Endothelial cell of umbilical vein (primary cell): ENCODE measurements at regions of chr11 and their contacts with region 1.

Region 1: DNA sequence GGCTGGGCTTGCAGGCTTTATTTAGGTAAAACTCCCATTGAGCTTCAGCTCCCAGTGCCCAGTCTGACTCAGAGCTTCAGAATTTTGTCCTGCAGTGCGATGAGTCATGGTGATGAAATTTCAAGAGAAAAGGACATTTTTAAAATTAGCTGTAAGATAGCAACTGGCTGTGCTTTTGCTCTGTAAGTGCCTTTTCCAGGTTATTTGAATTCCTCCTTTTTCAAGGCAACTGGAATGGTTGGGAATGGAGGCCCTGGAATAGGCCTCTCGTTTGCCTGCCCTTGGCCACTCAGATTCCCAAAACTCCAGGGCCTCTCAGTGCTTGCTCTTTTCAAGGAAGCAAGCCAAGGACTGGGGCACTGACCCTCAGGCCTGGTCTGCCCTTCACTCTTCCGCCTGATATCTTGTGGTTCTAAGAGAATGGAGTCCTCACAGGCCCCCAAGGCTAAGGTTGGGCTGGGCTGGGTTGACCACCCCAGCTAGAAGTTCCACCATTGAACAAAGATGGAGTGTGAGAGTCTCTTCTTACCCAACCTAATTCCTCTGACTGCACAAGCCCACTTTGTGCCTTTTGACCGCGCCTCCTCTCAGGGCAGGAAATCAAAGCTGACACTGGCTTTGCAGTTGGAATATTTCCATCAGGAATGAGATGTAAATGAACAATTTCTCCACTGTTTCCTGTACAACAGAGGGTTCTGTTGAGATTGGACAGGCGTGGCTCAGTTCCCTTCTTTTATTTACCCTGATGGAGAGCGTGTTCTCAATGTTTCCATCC is 59.4 kb upstream of the PRSS23 start:
- DNase-seq: peak; percentile 94
- H3K4me3 ChIP-seq: peak overlapping the region in 1 of 3 experiments; percentile 7
- H3K27ac ChIP-seq: peak overlapping the region; percentile 99
- H3K4me1 ChIP-seq: peaks cover 78% of the 10 kb centered on the region
- H3K27me3 ChIP-seq: no peaks in the 10 kb centered on the region
- CTCF ChIP-seq: no peak
- POLR2A ChIP-seq: no peak

Region 2: DNA sequence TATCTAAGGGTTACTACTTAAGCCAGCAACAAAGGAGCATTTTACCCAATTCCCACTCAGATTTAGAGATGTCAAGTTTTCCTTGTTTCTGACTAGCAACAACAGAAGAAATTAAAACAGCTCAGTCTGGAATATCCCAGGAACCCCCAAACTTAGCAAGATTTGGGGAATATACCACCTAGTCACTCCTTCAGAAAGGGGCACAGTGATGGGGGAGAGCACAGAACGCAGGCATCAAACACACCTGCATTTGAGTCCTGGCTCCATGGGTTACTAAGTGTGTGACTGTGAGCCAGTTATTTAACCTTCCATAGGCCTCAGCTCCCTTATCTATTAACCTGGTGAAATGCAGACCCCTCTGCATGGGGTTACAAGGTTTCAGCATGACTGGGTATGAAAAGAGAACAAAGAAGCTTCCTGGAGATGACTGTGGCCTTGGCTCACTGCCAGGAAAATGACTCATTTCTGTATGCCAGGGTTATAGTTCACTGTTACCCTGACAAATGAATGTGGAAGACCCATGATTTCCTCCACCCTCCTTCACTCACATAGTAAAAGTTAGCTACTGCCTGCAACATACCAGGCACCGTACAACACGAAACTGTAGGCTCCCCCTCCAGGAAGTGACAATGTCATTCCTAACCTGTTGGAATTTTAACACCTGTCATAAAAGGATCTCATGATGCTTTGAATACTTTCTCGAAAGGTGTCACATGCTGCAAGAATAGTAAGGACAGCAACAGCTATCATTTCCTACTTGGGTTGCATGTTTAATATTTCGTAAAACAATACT is 148.0 kb before region 1 on chr11:
- CTCF ChIA-PET with region 1: no interaction called
- POLR2A ChIA-PET with region 1: no interaction called
- dilution Hi-C with region 1: no loop called
- intact Hi-C with region 1: loop called (anchors 5 kb)
- DNase-seq: peak; percentile 99
- H3K4me3 ChIP-seq: no peak overlapping the region
- H3K27ac ChIP-seq: peak overlapping the region; percentile 99
- H3K4me1 ChIP-seq: peaks cover 60% of the 10 kb centered on the region
- H3K27me3 ChIP-seq: no peaks in the 10 kb centered on the region
- CTCF ChIP-seq: no peak
- POLR2A ChIP-seq: peak; percentile 12

Region 3: DNA sequence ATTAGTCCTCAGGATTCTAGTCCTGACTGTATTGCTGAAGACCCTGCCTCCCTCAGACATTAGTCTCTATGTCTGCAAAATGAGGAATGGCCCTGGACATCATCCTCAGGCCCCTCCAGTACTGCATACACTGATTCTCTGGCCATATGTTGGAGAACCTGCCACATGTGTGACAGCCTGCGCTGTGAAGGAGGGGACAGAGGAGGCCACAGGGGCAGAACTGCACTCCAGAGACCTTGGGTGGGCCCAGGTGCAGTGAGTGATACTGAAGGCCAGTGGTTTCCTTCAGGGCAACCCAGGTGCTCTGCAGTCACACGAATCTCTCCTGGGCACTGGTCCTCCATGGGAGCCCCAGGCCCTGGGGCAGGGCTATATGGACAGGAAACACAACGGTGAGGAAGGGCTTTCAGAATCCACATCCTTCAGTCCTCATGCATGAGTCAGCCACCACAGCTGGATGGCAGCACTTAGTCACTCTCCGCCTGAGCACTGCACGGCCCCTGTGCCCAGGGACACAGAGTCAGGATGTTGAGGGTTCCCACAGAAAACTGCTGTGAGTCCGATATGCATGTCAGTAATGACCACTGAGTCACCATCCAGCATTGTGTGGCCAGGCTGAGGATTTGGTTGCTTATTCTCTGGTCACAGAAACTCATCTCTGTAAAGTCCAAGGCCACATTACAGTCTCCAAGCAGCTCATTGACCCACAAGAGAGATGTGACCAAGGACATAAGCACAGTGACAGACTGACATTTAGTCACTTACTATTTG is 108.2 kb before region 1 on chr11:
- CTCF ChIA-PET with region 1: no interaction called
- POLR2A ChIA-PET with region 1: no interaction called
- dilution Hi-C with region 1: no loop called
- intact Hi-C with region 1: loop called (anchors 1 kb)
- DNase-seq: peak; percentile 96
- H3K4me3 ChIP-seq: no peak overlapping the region
- H3K27ac ChIP-seq: peak overlapping the region; percentile 83
- H3K4me1 ChIP-seq: peaks cover 19% of the 10 kb centered on the region
- H3K27me3 ChIP-seq: no peaks in the 10 kb centered on the region
- CTCF ChIP-seq: peak in 1 of 2 donors; percentile 55
- POLR2A ChIP-seq: no peak

Region 4: DNA sequence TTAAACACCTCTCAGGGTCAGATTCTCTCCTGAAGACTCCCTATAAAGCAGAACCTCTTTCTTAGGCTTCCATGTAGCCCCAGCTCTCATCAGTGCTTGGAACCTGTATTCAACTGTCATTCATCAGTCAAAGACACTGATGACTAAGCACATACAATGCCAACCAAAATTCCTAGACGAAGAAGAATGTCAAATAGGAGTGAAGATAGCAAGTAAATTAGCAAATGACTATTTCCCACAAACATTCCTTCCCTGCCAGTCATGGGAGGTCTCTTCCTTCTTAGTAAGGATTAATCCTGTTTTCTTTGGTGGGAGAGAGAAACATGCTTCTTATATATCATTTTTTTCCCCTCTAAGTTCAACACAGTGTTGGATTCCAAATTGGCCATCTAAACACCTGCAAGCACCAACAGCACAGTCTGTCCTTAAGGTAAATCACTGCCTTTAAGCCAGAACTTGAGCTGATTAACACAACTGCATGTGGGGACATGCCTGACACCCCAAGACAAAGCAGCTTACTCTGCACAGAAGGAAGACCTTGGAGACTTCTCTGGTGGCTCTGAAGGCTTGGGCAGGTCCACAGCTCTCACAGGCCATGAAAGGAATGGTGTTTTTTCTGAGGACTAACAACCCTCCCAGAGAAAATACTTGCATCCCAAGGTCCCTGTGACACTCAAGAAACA is 21.0 kb before region 1 on chr11:
- CTCF ChIA-PET with region 1: interaction called, 9 read pairs
- POLR2A ChIA-PET with region 1: interaction called, 12 read pairs
- dilution Hi-C with region 1: no loop called
- intact Hi-C with region 1: loop called (anchors 1 kb)
- DNase-seq: peak; percentile 87
- H3K4me3 ChIP-seq: no peak overlapping the region
- H3K27ac ChIP-seq: peak overlapping the region; percentile 87
- H3K4me1 ChIP-seq: peaks cover 31% of the 10 kb centered on the region
- H3K27me3 ChIP-seq: no peaks in the 10 kb centered on the region
- CTCF ChIP-seq: no peak
- POLR2A ChIP-seq: no peak

Region 5: DNA sequence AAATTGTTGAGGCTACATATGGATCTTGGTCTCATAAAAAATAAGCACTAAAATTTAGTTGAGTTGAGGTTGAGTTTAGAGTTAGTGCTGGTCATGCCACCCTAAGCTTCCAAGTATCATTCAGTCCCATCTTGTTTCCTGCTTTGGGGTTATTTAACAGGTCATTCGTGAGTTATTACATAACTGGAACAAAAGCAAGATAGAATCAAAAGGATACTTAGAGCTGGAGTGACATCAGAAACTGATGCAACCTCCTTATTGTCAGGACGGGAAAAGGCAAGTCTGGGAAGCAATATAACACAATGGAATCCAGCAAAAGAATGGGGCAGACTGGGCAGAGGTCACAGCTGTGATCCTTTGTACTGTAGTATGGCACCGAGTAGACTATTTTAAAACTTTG is 55.0 kb after region 1 on chr11:
- CTCF ChIA-PET with region 1: interaction called, 15 read pairs
- POLR2A ChIA-PET with region 1: interaction called, 5 read pairs
- dilution Hi-C with region 1: no loop called
- intact Hi-C with region 1: loop called (anchors 1 kb)
- DNase-seq: peak; percentile 85
- H3K4me3 ChIP-seq: no peak overlapping the region
- H3K27ac ChIP-seq: peak overlapping the region; percentile 44
- H3K4me1 ChIP-seq: peaks cover 12% of the 10 kb centered on the region
- H3K27me3 ChIP-seq: no peaks in the 10 kb centered on the region
- CTCF ChIP-seq: no peak
- POLR2A ChIP-seq: no peak